Activated CD4-positive, alpha-beta T cell treated with anti-CD3 and anti-CD28 coated beads for 36 hours (primary cell): ENCODE measurements at regions of chr4 and their contacts with region 1.

Region 1: DNA sequence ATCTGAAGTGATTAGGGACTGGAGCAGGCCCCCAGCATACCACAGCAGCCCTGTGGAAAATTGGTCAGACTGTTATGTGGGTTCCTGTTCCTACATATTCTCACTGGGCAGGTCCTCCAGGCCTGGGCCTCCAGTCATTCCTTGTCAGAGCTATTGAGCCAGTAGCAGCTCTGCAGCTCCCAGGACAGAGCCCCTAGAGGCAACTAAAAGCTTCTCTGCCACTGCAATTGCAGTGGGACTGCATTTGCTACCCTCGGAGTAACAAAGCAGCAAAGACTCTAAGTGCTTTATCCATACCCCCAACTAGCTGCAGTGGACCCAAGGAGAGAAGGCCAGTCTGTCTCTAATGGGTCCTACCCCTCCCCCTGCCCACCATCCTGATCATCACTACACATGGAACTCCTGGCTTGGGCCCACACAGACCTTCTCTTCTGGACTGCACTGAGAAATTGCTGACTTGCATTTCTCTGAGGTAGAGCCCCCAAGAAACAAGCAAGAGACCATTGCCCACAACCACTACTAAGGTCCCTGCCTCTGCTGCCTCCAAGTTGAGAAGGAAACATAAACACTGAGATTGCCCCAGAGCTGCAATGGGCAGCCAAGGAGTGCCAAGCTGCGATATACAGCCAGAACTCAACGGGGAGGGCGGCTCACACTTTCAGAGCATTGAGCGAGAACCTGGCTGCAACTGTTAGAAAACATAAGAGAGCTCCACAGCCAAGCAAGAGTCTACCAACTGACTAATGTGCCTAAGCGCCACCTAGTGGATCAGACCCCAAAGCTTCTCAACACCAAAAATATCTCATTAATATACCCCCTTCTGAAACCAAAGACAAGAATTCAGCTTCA is 738.7 kb upstream of the NDST4 start:
- DNase-seq: peak; percentile 49
- ATAC-seq: no peak
- H3K4me3 Mint-ChIP-seq: no peak overlapping the region
- H3K27ac Mint-ChIP-seq: no peak overlapping the region
- H3K4me1 Mint-ChIP-seq: no peaks in the 10 kb centered on the region
- H3K27me3 Mint-ChIP-seq: no peaks in the 10 kb centered on the region

Region 2: DNA sequence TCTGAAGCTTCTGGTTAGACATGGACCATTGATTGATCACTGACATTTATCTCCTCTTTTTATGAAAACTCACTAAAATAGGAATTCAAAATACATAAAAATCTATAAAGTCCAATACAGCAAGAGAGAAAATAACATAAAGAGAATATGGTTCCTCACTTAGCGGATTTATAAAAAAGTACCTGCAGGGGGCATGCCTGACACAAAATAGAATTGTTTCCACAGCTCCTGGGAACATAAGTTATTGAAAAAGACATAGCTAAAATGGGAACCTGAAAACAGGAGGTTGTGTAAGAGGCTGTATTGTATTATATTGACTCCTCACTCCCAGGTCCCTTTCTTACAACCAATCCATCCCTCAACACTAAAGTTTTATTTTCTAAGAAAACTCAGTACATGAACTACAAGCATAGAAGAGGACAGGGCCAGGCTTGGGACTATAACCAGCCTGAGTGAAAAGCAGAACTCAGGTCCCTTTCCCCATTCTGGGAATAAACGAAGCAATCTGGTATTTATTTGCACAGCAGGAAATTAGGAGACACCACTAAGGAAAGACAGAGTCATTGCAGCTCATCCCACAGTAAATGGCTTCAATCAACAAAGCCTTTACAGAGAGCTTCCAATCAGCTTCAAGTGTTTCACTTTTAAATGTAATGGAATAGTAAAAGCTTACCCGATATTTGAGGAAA is 617.6 kb before region 1 on chr4:
- CTCF ChIA-PET with region 1: no interaction called
- POLR2A ChIA-PET with region 1: no interaction called
- intact Hi-C with region 1: loop called (anchors 5 to 10 kb)
- DNase-seq: peak; percentile 5
- ATAC-seq: no peak
- H3K4me3 Mint-ChIP-seq: no peak overlapping the region
- H3K27ac Mint-ChIP-seq: no peak overlapping the region
- H3K4me1 Mint-ChIP-seq: no peaks in the 10 kb centered on the region
- H3K27me3 Mint-ChIP-seq: no peaks in the 10 kb centered on the region